ENCODE measurements at regions of chr2 and their contacts with region 1.

Region 1: GRCh38 chr2:203650860-203651613 is 55.4 kb upstream of the CD28 start:
- DNase-seq: peak in 1 of 35 experiments; percentile 39
- ATAC-seq: peak in 3 of 4 experiments; percentile 43 to 51 (median 47)
- H3K4me3 ChIP-seq: no peak overlapping the region
- H3K4me3 Mint-ChIP-seq: no peak overlapping the region
- H3K27ac ChIP-seq: no peak overlapping the region
- H3K27ac Mint-ChIP-seq: no peak overlapping the region
- H3K4me1 ChIP-seq: no peaks in the 10 kb centered on the region
- H3K4me1 Mint-ChIP-seq: peaks cover 15 to 28% (median 22%) of the 10 kb centered on the region in 3 donors
- H3K27me3 ChIP-seq: no peaks in the 10 kb centered on the region
- H3K27me3 Mint-ChIP-seq: no peaks in the 10 kb centered on the region

Region 2: GRCh38 chr2:203492965-203493364 is 158.1 kb before region 1 on chr2:
- CTCF ChIA-PET with region 1: interaction called, 5 to 10 read pairs
- POLR2A ChIA-PET with region 1: no interaction called
- DNase-seq: peak in 1 of 35 experiments; percentile 24
- ATAC-seq: peak in 2 of 4 experiments; percentile 48 to 55
- H3K4me3 ChIP-seq: no peak overlapping the region
- H3K4me3 Mint-ChIP-seq: no peak overlapping the region
- H3K27ac ChIP-seq: no peak overlapping the region
- H3K27ac Mint-ChIP-seq: peak overlapping the region; percentile 43 to 49
- H3K4me1 ChIP-seq: no peaks in the 10 kb centered on the region
- H3K4me1 Mint-ChIP-seq: peaks cover 1 to 15% (median 14%) of the 10 kb centered on the region in 3 donors
- H3K27me3 ChIP-seq: no peaks in the 10 kb centered on the region
- H3K27me3 Mint-ChIP-seq: no peaks in the 10 kb centered on the region